Sigmoid colon (tissue), 7 donors: ENCODE measurements at regions of chr4 and their contacts with region 1.

Region 1: DNA sequence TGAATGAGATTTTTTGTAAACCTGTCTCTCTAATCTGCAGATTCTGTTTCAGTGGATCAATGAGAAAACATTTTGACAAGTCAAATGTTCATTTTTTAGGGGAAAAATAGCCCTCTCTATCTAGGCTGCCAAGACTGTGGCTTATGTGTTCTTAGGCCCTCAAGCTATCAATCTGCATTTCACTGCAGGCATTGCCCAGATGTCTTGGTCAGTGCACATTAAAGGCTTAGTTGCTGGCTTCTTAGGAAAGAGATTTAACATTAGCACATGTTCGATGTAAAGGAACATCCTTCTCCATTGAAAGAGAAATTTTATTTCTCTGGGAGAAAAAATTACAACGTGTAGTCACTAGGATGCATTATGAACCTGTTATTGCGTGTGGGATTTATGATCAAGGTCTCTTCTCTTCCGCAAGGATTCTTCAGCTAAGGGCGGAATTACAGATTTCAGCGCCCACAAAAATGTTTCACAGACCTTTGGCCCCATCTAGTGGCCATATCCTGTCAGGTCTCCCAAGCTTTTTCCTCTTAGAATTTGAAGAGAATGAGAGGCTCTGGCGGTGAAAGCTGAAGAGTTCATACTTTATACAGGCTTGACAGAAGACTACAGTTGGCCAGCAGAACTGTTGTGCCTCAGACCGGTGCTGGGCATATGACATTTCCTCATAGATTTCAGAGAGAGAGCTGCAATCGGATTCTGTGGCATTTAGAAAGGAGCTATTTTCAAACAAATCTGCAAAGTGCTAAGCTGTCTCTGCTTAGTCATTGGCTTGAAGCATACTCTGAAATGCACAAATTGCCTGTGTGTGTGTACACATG is 144.6 kb upstream of the NOCT start:
- DNase-seq: peak; percentile 71
- H3K4me3 ChIP-seq: no peak overlapping the region
- H3K27ac ChIP-seq: no peak overlapping the region
- H3K4me1 ChIP-seq: peaks cover 0 to 14% (median 12%) of the 10 kb centered on the region in 4 donors
- H3K27me3 ChIP-seq: no peaks in the 10 kb centered on the region
- CTCF ChIP-seq: peak; percentile 61 to 81 (median 78)
- EP300 ChIP-seq: no peak
- POLR2A ChIP-seq: no peak

Region 2: GRCh38 chr4:138919094-138919936 is 48.4 kb after region 1 on chr4:
- intact Hi-C with region 1: loop called (anchors 5 kb)
- DNase-seq: peak; percentile 73
- H3K4me3 ChIP-seq: no peak overlapping the region
- H3K27ac ChIP-seq: no peak overlapping the region
- H3K4me1 ChIP-seq: peaks cover 0 to 8% (median 0%) of the 10 kb centered on the region in 4 donors
- H3K27me3 ChIP-seq: no peaks in the 10 kb centered on the region
- CTCF ChIP-seq: peak; percentile 25 to 78 (median 50)
- EP300 ChIP-seq: no peak
- POLR2A ChIP-seq: no peak